Activated CD4-positive, alpha-beta memory T cell treated with anti-CD3 and anti-CD28 coated beads for 36 hours (primary cell): ENCODE measurements at regions of chr1 and their contacts with region 1.

Region 1: GRCh38 chr1:23777979-23778814 is at the start of gene PITHD1:
- DNase-seq: peak; percentile 87
- H3K4me3 Mint-ChIP-seq: peak within 1 kb of the TSS; percentile 92
- H3K27ac Mint-ChIP-seq: peak within 1 kb of the TSS; percentile 85
- H3K4me1 Mint-ChIP-seq: peaks cover 44% of the 10 kb centered on the region
- H3K27me3 Mint-ChIP-seq: no peaks in the 10 kb centered on the region
- total RNA-seq, gene PITHD1: 67.2 to 69.0 TPM

Region 2: DNA sequence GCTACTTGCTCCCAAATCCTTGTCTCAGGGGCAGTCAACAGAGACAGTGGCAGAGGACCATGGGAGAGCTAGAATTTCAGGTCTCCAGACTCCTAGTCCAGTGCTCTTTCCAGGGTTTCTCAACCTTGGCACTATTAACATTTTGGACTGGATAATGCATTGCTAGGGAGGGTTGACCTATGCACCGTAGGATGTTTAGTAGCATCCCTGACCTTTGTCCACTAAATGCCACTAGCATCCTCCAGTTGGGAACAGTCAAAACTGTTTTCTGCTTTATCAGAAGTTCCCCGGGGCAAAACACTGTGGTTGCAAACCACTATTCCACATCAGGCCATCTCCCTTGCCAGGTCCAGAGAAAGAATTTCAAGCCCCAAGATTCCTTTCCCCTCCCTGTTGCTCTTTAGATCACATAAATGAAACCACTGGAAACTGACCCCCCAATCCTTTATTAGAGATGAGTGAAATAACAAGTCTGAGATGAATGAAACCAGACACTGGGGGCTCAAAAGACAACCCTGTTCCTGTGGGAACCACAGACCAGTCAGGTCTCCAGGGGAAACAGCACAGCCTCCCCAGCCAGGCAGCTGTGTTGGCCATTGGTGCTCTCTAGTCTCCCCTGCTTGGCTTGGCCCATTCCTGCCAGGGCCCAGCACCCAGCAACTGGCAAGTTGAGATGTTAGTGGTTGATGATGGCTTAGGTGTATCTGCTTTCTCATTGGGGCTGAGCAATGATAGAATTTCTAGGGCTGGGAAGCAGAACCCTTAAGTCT is 349.9 kb before region 1 on chr1:
- CTCF ChIA-PET with region 1: no interaction called
- POLR2A ChIA-PET with region 1: no interaction called
- intact Hi-C with region 1: no loop called
- DNase-seq: no peak
- H3K4me3 Mint-ChIP-seq: no peak overlapping the region
- H3K27ac Mint-ChIP-seq: no peak overlapping the region
- H3K4me1 Mint-ChIP-seq: peaks cover 9% of the 10 kb centered on the region
- H3K27me3 Mint-ChIP-seq: peaks cover 4% of the 10 kb centered on the region

Region 3: GRCh38 chr1:23691499-23692307 is 86.5 kb before region 1 on chr1 and contains the start of gene RPL11:
- CTCF ChIA-PET with region 1: interaction called, 6 read pairs
- POLR2A ChIA-PET with region 1: interaction called, 10 read pairs
- intact Hi-C with region 1: no loop called
- DNase-seq: peak; percentile 93
- H3K4me3 Mint-ChIP-seq: peak within 1 kb of the TSS; percentile 92
- H3K27ac Mint-ChIP-seq: peak within 1 kb of the TSS; percentile 78
- H3K4me1 Mint-ChIP-seq: peaks cover 42% of the 10 kb centered on the region
- H3K27me3 Mint-ChIP-seq: no peaks in the 10 kb centered on the region
- total RNA-seq, gene RPL11: 1,338 to 1,385 TPM

Region 4: DNA sequence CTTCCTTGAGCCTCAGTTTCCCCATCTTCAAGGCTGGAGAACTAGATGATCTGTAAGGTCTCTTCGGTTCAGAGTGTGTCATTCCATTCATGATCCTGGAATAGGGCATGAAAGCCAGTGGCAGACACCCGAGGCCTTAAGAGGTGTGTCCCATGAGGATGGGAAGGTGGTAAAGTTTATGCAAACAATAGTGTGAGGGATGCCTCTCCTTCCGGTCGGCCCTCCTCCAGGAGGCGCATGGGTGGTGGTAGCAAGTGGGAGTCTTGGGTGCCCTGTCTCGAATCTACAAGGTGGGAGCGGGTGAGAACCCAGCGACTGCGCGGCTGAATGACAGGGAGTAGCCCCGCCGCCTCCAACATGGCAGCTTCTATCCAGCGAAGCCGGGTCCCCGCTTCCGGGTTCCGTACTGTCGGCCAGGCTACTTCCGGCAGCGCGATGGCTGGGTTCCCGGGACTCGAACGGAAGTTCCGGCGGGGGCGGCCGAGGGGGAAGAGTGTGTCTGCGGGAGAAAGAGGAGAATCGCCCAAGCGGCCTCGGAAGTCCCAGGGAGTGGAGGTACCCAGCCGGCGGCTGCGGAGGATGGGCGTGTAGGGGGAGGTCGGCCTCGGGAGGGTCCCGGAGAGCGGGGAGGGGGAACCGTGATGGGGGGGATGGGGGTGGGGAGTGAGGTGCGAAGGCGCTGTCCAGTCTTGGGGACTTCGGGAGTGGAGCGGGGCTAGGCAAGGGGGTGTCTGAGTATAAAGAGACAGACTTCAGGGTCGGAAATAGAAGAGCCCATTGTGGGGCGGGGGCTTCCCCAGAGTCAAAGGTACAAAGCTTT is 12.7 kb after region 1 on chr1 and contains the start of gene LYPLA2:
- CTCF ChIA-PET with region 1: interaction called, 4 read pairs
- POLR2A ChIA-PET with region 1: interaction called, 40 read pairs
- intact Hi-C with region 1: loop called (anchors 1 kb)
- DNase-seq: peak; percentile 93
- H3K4me3 Mint-ChIP-seq: peak within 1 kb of the TSS; percentile 98
- H3K27ac Mint-ChIP-seq: peak within 1 kb of the TSS; percentile 89
- H3K4me1 Mint-ChIP-seq: peaks cover 29% of the 10 kb centered on the region
- H3K27me3 Mint-ChIP-seq: no peaks in the 10 kb centered on the region
- total RNA-seq, gene LYPLA2: 70.5 to 71.1 TPM

Region 5: GRCh38 chr1:24161270-24161669 is 383.1 kb after region 1 on chr1:
- CTCF ChIA-PET with region 1: no interaction called
- POLR2A ChIA-PET with region 1: no interaction called
- intact Hi-C with region 1: no loop called
- DNase-seq: no peak
- H3K4me3 Mint-ChIP-seq: no peak overlapping the region
- H3K27ac Mint-ChIP-seq: no peak overlapping the region
- H3K4me1 Mint-ChIP-seq: no peaks in the 10 kb centered on the region
- H3K27me3 Mint-ChIP-seq: no peaks in the 10 kb centered on the region